CD4-positive, alpha-beta memory T cell (primary cell): ENCODE measurements at regions of chr4 and their contacts with region 1.

Region 1: DNA sequence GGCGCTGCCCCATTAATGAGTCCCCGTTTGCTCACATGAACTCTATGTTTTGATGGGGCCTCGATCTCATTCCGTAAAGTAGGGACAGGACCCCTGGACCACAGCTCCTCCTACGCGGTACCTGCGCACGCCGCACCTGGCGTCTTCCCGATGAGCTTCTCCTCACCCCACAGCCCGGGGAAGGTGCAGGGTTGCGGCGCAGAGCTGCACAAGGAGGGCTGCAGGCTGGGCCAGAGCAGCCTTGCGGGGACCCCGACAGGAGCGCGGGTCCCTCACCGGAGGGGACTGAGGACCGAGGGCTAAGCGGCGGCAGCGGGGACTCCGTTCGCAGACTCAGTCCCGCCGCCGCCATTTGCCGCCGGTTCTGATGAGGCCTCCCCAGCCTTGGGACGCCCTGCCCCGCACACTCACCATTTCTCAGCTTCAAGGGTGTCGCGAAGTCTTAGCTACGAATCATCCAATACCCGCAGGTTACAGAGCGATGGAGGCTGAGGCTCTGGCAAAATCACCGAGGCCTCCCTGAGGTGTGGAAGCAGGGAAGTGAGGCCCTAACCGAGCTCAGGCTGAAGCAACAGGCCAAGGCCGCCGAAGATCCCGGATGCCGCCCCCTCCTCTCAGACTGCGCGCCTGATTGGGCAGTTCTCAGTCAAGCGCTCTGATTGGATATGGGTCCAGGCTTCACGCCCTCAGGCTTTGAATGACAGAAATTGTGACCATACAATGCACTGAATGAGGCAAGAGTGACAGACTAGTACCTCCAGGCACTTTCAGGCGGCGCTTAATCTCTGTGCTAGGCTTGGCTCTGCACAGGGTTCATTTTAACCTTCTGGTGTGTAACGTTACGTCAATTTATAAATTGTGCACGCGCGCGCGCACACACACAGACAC is 25.1 kb downstream of the ZNF721 start:
- DNase-seq: peak; percentile 96 to 98 (median 96)
- H3K4me3 ChIP-seq: peak overlapping the region; percentile 42 to 51
- H3K4me3 Mint-ChIP-seq: peak overlapping the region; percentile 96 to 100 (median 98)
- H3K27ac ChIP-seq: peak overlapping the region; percentile 86
- H3K27ac Mint-ChIP-seq: peak overlapping the region; percentile 99 to 100 (median 99)
- H3K4me1 ChIP-seq: peaks cover 11% of the 10 kb centered on the region
- H3K4me1 Mint-ChIP-seq: peaks cover 17 to 41% (median 29%) of the 10 kb centered on the region in 4 donors
- H3K27me3 ChIP-seq: no peaks in the 10 kb centered on the region
- H3K27me3 Mint-ChIP-seq: no peaks in the 10 kb centered on the region

Region 2: GRCh38 chr4:114149-114548 is 359.7 kb before region 1 on chr4:
- CTCF ChIA-PET with region 1: no interaction called
- POLR2A ChIA-PET with region 1: no interaction called
- intact Hi-C with region 1: no loop called
- DNase-seq: no peak
- H3K4me3 ChIP-seq: no peak overlapping the region
- H3K4me3 Mint-ChIP-seq: no peak overlapping the region
- H3K27ac ChIP-seq: no peak overlapping the region
- H3K27ac Mint-ChIP-seq: no peak overlapping the region
- H3K4me1 ChIP-seq: no peaks in the 10 kb centered on the region
- H3K4me1 Mint-ChIP-seq: peaks cover 0 to 2% (median under 1%) of the 10 kb centered on the region in 4 donors
- H3K27me3 ChIP-seq: peaks cover 3% of the 10 kb centered on the region
- H3K27me3 Mint-ChIP-seq: peaks cover 19 to 20% of the 10 kb centered on the region in 2 donors

Region 3: DNA sequence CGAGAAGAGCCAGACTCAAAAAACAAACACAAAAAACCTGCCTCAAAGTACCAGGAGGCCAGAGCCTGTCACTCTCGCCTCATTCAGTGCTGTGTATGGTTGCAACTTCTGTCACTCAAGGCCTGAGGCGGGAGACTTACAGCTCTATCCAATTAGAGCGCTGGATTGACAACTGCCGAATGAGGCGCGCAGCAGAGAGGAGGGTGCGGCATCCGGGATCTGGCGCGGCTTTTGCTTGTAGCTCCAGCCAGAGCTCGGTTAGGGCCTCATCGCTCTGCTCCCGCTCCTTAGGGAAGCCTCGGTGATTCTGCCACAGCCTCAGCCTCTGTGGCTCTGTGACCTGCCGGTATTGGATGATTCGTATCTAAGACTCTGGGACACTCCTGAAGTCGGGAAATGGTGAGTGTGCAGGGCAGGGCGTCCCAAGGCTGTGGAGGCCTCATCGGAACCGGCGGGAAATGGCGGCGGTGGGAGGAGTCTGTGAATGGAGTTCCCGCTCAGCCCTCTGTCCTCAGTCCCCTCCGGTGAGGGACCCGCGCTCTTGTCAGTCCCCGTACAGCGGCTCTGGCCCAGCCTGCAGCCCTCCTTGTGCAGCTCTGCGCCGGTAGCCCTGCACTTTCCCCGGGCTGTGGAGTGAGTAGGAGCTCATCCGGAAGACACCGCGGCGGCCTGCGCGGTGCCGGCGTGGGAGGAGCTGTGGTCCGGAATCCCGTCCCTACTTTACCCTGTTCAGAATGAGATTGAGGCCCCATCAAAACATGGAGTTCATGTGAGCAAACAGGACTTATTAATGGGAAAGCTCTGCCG is 349.3 kb before region 1 on chr4 and contains the start of gene ZNF718:
- CTCF ChIA-PET with region 1: no interaction called
- POLR2A ChIA-PET with region 1: interaction called, 18 read pairs
- intact Hi-C with region 1: loop called (anchors 5 kb)
- DNase-seq: peak; percentile 82 to 94 (median 91)
- H3K4me3 ChIP-seq: peak within 1 kb of the TSS; percentile 71 to 87
- H3K4me3 Mint-ChIP-seq: peak within 1 kb of the TSS; percentile 95 to 100 (median 98)
- H3K27ac ChIP-seq: peak within 1 kb of the TSS; percentile 69
- H3K27ac Mint-ChIP-seq: peak within 1 kb of the TSS; percentile 96 to 99 (median 97)
- H3K4me1 ChIP-seq: peaks cover 38% of the 10 kb centered on the region
- H3K4me1 Mint-ChIP-seq: peaks cover 22 to 49% (median 40%) of the 10 kb centered on the region in 4 donors
- H3K27me3 ChIP-seq: no peaks in the 10 kb centered on the region
- H3K27me3 Mint-ChIP-seq: no peaks in the 10 kb centered on the region
- total RNA-seq, gene ZNF718: 13.0 to 14.0 TPM

Region 4: DNA sequence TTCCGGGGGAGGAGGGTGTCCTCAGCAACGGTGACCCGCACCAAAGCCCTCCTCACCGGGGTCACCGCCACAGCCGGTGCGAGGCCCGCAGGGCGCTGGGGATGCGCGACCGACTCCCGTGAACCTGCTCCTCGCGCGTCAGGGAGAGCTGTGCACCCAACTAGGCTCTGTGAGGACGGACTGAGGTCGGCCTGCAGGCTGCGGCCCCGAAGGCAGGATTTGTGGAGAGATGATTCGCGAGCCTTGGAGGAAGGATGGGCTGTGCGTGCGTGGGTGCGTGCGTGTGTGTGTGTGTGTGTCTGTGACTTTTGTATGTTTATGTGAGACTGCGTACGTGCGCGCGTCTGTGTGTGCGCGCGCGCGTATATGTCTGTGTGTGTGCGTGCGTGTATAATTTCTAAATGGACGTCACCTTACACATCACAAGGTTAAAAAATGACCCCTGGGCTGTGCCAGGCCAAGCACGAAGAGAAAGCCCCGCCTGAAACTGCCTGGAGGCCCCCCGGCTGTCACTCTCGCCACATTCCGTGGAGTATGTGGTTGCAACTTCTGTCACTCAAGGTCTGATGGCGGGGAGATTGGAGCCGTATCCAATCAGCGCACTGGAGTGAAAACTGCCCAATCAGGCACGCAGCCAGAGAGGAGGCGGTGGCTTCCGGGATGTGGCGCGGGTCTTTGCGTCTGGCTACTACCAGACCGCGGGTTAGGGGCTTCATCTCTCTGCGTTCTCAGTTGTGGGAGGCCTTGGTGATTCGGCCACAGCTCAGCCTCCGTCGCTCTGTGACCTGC is 136.5 kb before region 1 on chr4 and contains the start of gene ZNF141:
- CTCF ChIA-PET with region 1: interaction called, 3 read pairs
- POLR2A ChIA-PET with region 1: interaction called, 33 read pairs
- intact Hi-C with region 1: loop called (anchors 1 kb)
- DNase-seq: peak; percentile 90 to 97 (median 94)
- H3K4me3 ChIP-seq: peak within 1 kb of the TSS; percentile 68 to 99
- H3K4me3 Mint-ChIP-seq: peak within 1 kb of the TSS; percentile 96 to 100 (median 99)
- H3K27ac ChIP-seq: peak within 1 kb of the TSS; percentile 78
- H3K27ac Mint-ChIP-seq: peak within 1 kb of the TSS; percentile 98 to 99 (median 99)
- H3K4me1 ChIP-seq: peaks cover 15% of the 10 kb centered on the region
- H3K4me1 Mint-ChIP-seq: peaks cover 19 to 54% (median 35%) of the 10 kb centered on the region in 4 donors
- H3K27me3 ChIP-seq: no peaks in the 10 kb centered on the region
- H3K27me3 Mint-ChIP-seq: peaks cover 0 to 3% of the 10 kb centered on the region in 2 donors
- total RNA-seq, gene ZNF141: 55.2 to 59.6 TPM

Region 5: DNA sequence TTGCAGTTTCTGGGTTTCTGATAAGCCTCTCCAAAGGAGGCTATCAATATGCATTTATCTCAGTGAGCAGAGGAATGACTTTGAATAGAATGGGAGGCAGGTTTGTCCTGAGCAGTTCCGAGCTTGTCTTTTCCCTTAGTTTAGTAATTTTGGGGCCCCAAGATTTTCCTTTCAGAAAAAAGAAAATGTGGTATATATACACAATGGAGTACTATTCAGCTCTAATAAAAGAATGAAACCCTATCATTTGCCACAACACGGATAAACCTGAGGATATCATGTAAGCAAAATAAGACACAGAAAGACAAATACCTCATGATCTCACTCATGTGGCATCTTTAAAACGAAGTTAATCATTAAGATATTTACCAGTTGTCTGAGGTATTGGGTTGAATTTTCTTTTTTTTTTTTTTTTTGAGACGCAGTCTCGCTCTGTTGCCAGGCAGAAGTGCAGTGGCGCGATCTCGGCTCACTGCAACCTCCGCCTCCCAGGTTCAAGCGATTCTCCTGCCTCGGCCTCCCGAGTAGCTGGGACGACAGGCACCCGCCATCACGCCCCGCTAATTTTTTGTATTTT is 24.6 kb after region 1 on chr4:
- CTCF ChIA-PET with region 1: no interaction called
- POLR2A ChIA-PET with region 1: interaction called, 42 read pairs
- intact Hi-C with region 1: loop called (anchors 1 kb)
- DNase-seq: no peak
- H3K4me3 ChIP-seq: peak overlapping the region in 1 of 2 donors; percentile 88
- H3K4me3 Mint-ChIP-seq: peak overlapping the region; percentile 92 to 95 (median 93)
- H3K27ac ChIP-seq: peak overlapping the region; percentile 89
- H3K27ac Mint-ChIP-seq: peak overlapping the region; percentile 93 to 97 (median 96)
- H3K4me1 ChIP-seq: peaks cover 22% of the 10 kb centered on the region
- H3K4me1 Mint-ChIP-seq: peaks cover 25 to 65% (median 47%) of the 10 kb centered on the region in 4 donors
- H3K27me3 ChIP-seq: no peaks in the 10 kb centered on the region
- H3K27me3 Mint-ChIP-seq: no peaks in the 10 kb centered on the region

Region 6: DNA sequence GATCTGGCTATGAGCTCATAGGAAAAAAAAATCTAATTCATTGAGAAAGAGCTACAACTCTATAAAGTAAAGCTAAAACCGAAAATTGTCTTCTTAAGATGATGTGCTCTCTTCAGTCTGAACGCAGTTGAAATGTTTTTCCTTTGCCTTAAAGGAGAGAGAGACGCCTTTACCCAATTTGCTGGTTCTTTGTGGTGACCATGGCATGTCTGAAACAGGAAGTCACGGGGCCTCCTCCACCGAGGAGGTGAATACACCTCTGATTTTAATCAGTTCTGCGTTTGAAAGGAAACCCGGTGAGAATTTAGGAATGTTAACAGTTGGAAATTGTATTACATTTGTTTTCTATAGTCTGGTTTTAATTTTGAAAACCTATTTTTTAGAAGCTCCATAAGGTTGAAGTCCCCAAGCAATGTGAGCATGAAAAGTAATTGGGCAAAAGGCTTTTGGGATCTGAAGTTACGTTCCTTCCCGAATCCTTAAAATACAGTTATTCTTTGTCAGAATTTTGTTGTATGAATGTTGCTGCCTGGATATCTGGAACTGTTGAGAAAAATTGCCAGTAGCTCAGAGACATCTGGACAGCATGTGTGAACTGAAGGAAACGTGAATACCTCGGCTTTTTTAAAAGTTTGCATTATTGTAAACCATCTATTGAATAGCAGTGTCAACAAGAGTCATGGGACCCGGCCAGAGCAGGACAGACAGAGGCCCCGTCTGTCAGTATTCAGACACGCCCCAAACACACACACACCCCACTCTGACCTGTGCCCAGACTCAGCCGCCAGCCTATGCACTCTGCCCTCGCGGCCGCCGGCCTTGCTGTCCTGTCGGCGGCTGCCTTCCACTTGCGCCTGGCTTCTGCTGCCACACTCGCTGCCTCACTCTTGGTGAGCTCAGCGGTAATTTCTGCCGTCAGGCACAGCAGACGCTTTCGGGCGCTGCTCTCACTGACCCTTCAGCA is 35.1 kb after region 1 on chr4:
- CTCF ChIA-PET with region 1: no interaction called
- POLR2A ChIA-PET with region 1: interaction called, 10 read pairs
- intact Hi-C with region 1: no loop called
- DNase-seq: peak in 3 of 5 donors; percentile 9 to 22 (median 16)
- H3K4me3 ChIP-seq: no peak overlapping the region
- H3K4me3 Mint-ChIP-seq: peak overlapping the region in 5 of 8 donors; percentile 14 to 68 (median 50)
- H3K27ac ChIP-seq: no peak overlapping the region
- H3K27ac Mint-ChIP-seq: peak overlapping the region in 5 of 7 donors; percentile 65 to 91 (median 77)
- H3K4me1 ChIP-seq: peaks cover 15% of the 10 kb centered on the region
- H3K4me1 Mint-ChIP-seq: peaks cover 21 to 42% (median 30%) of the 10 kb centered on the region in 4 donors
- H3K27me3 ChIP-seq: no peaks in the 10 kb centered on the region
- H3K27me3 Mint-ChIP-seq: no peaks in the 10 kb centered on the region

Region 7: DNA sequence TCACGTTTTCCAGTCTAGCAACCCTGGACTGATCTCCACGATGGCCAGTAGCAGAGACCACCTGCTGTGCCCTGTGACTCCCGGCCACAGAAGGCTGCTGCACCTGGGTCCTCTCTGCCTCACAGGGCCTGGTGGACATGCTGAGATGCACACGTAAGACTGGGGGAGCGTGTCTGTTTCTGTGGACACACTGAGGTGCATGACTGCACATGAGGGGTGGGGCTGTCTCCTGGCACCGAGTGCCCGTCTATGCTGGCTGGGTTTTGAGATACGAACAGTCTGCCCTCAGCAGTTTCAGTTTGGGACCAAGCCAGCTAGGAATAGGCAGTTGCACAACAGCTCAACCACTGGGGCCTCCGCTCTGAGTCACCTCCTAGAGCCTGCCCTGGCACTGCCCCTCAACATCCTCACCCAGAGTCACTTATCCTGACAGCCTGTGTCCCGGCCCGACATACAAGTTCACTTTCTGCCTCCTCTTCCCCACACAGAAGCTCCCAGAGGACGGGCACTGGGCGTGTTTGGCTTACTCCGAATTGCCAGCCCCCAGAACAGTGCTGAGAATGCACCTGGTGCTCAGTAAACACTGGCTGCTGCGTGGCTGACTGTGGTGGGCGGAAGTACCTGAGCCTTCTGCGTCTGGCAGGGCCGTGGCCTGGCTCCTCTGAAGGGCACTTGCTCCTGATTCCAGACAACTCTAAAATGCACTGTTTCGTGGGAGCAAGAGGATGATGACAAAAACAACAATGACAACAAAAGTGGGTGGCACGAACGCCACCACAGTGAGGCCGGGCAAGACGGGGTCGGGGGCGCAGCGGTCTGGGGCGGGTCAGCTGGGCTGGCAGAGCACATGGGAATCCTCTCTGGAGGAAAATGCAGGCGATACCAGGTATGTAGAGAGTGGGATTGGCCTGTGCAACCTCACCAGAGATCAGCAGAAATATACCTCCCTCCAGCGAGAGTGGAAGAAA is 608.7 kb after region 1 on chr4:
- CTCF ChIA-PET with region 1: no interaction called
- POLR2A ChIA-PET with region 1: no interaction called
- intact Hi-C with region 1: no loop called
- DNase-seq: no peak
- H3K4me3 ChIP-seq: no peak overlapping the region
- H3K4me3 Mint-ChIP-seq: no peak overlapping the region
- H3K27ac ChIP-seq: no peak overlapping the region
- H3K27ac Mint-ChIP-seq: peak overlapping the region in 1 of 7 donors; percentile 35
- H3K4me1 ChIP-seq: no peaks in the 10 kb centered on the region
- H3K4me1 Mint-ChIP-seq: no peaks in the 10 kb centered on the region
- H3K27me3 ChIP-seq: no peaks in the 10 kb centered on the region
- H3K27me3 Mint-ChIP-seq: peaks cover 12 to 31% of the 10 kb centered on the region in 2 donors